ENCODE measurements at regions of chr7 and their contacts with region 1.

Region 1: GRCh38 chr7:77157446-77157845 is 35.0 kb downstream of the CCDC146 start:
- DNase-seq: peak; percentile 2
- H3K4me3 Mint-ChIP-seq: peak overlapping the region; percentile 50
- H3K27ac Mint-ChIP-seq: peak overlapping the region; percentile 94
- H3K4me1 Mint-ChIP-seq: peaks cover 34% of the 10 kb centered on the region
- H3K27me3 Mint-ChIP-seq: no peaks in the 10 kb centered on the region

Region 2: GRCh38 chr7:77188731-77189437 is 31.4 kb after region 1 on chr7:
- intact Hi-C with region 1: loop called (anchors 2 kb)
- DNase-seq: no peak
- H3K4me3 Mint-ChIP-seq: no peak overlapping the region
- H3K27ac Mint-ChIP-seq: no peak overlapping the region
- H3K4me1 Mint-ChIP-seq: peaks cover 17% of the 10 kb centered on the region
- H3K27me3 Mint-ChIP-seq: peaks cover 2% of the 10 kb centered on the region

Region 3: GRCh38 chr7:77199013-77199966 is 41.8 kb after region 1 on chr7 and contains the start of gene FGL2:
- intact Hi-C with region 1: loop called (anchors 1 kb)
- DNase-seq: no peak
- H3K4me3 Mint-ChIP-seq: peak within 1 kb of the TSS; percentile 89
- H3K27ac Mint-ChIP-seq: peak within 1 kb of the TSS; percentile 47
- H3K4me1 Mint-ChIP-seq: peaks cover 54% of the 10 kb centered on the region
- H3K27me3 Mint-ChIP-seq: no peaks in the 10 kb centered on the region
- total RNA-seq, gene FGL2: 4.0 and 4.7 TPM in 2 replicates

Region 4: GRCh38 chr7:77281780-77282478 is 124.5 kb after region 1 on chr7:
- intact Hi-C with region 1: no loop called
- DNase-seq: no peak
- H3K4me3 Mint-ChIP-seq: no peak overlapping the region
- H3K27ac Mint-ChIP-seq: no peak overlapping the region
- H3K4me1 Mint-ChIP-seq: no peaks in the 10 kb centered on the region
- H3K27me3 Mint-ChIP-seq: peaks cover 4% of the 10 kb centered on the region

Region 5: GRCh38 chr7:77293046-77293445 is 135.6 kb after region 1 on chr7:
- intact Hi-C with region 1: no loop called
- DNase-seq: no peak
- H3K4me3 Mint-ChIP-seq: no peak overlapping the region
- H3K27ac Mint-ChIP-seq: no peak overlapping the region
- H3K4me1 Mint-ChIP-seq: no peaks in the 10 kb centered on the region
- H3K27me3 Mint-ChIP-seq: no peaks in the 10 kb centered on the region

Region 6: GRCh38 chr7:77348371-77348813 is 190.9 kb after region 1 on chr7:
- intact Hi-C with region 1: no loop called
- DNase-seq: no peak
- H3K4me3 Mint-ChIP-seq: no peak overlapping the region
- H3K27ac Mint-ChIP-seq: no peak overlapping the region
- H3K4me1 Mint-ChIP-seq: peaks cover 37% of the 10 kb centered on the region
- H3K27me3 Mint-ChIP-seq: no peaks in the 10 kb centered on the region

Measured in activated T-helper 1 cell treated with anti-CD3 and anti-CD28 coated beads, Interleukin-12 subunit alpha, Interleukin-12 subunit beta, Interleukin-2, Interleukin-4 antibody, amounts not matched to agents 30 ng/mL and 10 ng/mL and 1 ng/mL, durations not matched to agents 14 hours and 24 hours and 36 hours (primary cell).